ENCODE measurements at regions of chr17 and their contacts with region 1.

Region 1: DNA sequence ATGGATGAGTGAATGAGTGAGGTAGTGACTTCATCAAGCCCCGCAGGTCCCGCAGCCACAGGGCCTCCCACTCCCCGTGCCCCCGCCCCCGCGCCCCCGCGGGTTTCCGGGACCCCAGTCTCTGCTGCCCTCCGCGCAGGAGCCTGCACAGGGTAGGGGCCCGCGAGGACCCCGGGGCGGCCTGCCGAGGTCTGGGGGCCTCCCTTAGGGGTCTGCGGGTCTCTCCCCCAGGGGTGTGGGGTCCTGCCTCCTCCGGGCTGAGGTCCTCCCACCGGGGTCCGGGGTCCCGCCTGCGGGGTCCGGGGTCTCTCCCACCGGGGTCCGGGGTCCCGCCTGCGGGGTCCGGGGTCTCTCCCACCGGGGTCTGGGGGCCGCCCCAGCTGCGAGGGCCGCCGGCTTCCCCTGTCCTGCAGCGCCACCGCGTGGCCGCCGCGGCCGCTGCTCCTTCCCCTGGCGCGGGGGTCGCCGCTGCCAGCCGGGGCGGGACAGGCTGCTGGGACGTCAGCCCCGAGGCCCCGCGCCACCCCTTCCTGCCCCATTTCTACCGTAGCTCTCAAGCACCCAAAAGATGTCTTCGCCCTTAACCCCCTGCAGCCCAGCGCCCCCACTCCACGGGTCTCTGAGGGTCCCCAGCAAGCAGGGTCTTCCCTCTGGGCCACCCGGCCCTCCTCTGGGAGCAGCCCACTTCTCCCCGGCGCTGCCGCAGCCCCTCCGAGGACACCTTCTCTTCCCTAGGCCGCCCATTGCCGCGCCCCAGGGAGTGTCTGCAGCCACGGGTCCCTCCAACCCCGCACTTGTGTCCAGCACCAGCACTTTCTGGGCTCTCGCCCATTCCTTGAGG is 10.4 kb upstream of the CHMP6 start:
- DNase-seq: no peak
- H3K4me3 ChIP-seq: peak overlapping the region in 1 of 2 donors; percentile 11
- H3K27ac ChIP-seq: no peak overlapping the region
- H3K4me1 ChIP-seq: peaks cover 4 to 7% of the 10 kb centered on the region in 2 donors
- H3K27me3 ChIP-seq: no peaks in the 10 kb centered on the region
- CTCF ChIP-seq: peak; percentile 26 to 95 (median 73)

Region 2: GRCh38 chr17:80564545-80564944 is 416.7 kb before region 1 on chr17:
- intact Hi-C with region 1: no loop called
- DNase-seq: no peak
- H3K4me3 ChIP-seq: no peak overlapping the region
- H3K27ac ChIP-seq: no peak overlapping the region
- H3K4me1 ChIP-seq: no peaks in the 10 kb centered on the region
- H3K27me3 ChIP-seq: no peaks in the 10 kb centered on the region
- CTCF ChIP-seq: no peak

Region 3: DNA sequence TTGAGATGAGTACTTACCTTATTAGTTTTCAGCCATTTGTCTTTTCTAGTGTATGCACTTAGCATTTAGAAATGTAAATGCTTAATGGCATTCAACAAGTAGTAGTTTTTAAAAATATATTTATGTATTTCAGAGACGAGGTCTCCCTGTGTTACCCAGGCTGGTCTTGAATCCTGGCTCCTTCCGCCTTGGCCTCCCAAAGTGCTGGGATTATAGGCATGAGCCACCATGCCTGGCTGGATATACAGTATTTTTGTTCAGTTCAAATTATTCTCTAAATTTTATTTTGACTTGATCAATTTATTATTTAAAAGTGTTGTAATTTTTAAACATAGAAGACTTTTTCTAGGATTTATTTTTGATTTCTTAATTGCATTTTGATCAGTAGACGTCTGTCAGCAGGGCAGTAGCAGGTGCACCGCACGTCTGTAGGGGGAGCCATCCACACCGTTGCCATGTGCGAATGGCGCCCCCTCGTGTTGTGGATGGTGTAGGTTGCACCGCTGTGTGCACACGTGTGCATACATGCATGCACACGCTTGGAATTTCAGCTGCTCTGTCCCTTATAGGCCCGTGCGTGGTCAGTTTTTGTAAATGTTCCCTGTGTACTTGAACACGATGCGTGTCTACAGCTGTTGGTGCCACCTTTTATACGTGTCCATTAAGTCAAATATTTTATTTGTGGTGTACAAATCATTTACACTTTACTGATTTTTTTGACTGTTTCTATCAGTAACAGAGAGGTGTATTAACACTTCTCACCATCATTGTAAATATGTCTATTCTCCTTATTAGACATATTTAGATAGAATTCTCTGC is 406.0 kb before region 1 on chr17:
- intact Hi-C with region 1: loop called (anchors 10 kb)
- DNase-seq: peak; percentile 15 to 81
- H3K4me3 ChIP-seq: no peak overlapping the region
- H3K27ac ChIP-seq: no peak overlapping the region
- H3K4me1 ChIP-seq: no peaks in the 10 kb centered on the region
- H3K27me3 ChIP-seq: no peaks in the 10 kb centered on the region
- CTCF ChIP-seq: peak; percentile 89 to 90 (median 90)

Region 4: DNA sequence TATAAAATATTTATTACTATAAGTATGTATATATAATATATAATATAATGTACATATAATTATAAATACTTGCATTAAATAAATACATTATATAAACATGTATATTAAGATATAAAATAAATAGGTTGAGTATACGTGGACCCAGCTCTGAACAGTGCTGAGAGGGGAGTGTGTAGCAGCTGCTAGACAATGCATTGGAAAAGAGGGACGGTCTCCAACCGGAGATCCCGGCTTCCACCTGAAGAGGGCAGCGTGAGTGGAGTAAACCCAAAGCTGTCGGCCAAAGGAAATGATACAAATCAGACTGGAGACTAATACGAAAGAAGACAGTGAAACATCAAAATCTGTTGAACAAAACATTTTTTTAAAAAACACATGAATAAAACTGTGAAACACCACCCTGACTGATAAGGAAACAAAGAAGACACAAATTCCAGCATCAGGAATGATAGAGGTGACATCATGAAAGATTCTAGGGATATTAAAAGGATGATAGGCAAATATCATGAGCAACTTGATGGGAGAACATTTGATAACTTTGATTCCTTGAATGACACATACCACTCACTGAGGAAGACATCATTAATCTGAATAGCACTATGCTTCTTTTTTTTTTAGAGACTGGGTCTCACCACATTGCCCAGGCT is 115.0 kb before region 1 on chr17:
- intact Hi-C with region 1: loop called (anchors 5 kb)
- DNase-seq: peak in 1 of 2 donors; percentile 72
- H3K4me3 ChIP-seq: no peak overlapping the region
- H3K27ac ChIP-seq: no peak overlapping the region
- H3K4me1 ChIP-seq: no peaks in the 10 kb centered on the region
- H3K27me3 ChIP-seq: no peaks in the 10 kb centered on the region
- CTCF ChIP-seq: peak; percentile 47 to 69 (median 64)

Region 5: DNA sequence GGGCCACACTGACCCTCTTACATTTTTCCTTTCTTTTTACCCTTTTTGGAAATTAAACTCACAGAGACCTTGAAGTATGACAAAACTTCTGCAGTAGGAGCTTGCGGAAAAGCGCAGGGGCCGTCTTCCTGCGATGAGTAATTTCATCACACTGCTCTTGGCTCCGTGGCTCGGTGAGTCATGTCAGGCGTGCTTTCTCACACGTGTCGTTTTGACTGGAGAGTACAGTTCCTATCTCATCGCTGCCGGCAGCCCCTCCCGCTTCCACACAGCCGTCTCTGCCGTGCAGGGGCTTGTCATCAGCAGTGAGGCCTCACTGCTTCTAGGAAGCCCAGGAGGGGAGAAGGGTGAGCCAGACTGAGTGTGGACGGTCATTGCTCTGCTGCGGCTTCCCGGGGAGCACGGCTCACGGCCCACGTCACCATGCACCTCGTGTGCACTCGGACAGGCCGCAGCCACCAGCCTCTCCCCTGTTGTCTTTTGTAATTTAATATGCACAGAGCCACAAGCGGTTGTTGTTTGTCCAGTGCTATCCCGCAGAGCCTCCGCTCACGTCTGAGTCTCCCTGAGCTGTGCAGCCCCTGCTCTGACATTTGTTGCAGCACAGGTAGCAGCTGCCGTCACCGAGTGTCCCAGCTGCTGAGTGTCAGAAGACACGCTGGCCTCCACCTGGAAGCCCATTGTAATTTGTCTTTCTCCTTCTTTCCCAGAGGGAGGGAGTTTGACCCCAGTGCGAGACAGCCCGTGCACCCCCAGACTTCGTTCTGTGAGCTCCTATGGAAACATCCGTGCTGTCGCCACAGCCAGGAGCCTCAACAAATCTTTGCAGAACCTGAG is 89.0 kb before region 1 on chr17:
- intact Hi-C with region 1: no loop called
- DNase-seq: peak in 1 of 2 donors; percentile 66
- H3K4me3 ChIP-seq: peak overlapping the region in 1 of 2 donors; percentile 35
- H3K27ac ChIP-seq: peak overlapping the region in 1 of 2 donors; percentile 83
- H3K4me1 ChIP-seq: peaks cover 0 to 4% of the 10 kb centered on the region in 2 donors
- H3K27me3 ChIP-seq: no peaks in the 10 kb centered on the region
- CTCF ChIP-seq: no peak

Region 6: DNA sequence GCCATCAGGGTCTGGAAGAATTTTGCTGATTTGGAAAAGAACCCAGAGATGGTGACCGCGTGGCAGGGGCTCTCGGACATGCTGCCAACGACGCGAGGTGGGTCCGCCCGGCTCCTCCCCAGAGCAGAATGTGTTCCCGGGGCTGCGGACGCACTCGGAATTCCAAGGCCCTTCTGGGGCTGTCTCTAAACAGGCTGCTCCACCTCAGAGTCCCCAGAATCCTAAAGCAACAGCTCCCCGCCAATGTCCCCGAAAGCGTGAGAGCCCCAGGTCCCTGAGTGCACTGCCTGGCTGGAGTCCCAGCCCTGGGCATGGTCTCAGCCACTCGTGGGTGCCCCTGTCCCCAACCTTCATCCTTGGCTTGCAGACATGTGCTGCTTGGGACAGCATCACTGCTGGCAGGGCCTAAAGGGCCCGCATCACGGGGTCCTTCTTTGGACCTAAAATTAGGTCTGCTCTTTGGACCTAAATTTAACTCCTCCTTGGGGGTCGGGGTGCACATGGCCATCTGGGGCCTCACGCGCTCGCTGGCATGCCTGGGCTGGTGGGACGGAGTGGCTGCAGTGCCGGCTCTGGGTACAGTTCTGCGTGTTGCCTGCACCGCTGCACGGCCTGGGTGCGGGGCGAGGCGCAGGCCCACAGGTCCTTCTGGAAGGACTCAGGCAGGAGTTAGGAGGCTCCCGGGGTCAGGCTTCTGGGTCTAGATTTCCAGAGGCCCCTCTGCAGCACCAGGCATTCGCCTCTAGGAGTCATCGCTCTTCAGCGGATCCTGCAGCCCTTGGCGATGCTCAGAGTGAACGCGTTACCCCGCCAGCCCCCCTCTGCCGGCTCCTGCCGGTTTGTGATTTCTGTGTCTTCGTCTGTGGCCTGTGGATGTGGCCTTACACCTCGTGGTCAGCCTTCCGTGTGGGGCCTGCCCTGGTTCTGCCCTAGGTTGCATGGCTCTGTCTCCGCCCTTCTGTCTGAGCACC is 31.5 kb before region 1 on chr17:
- intact Hi-C with region 1: loop called (anchors 5 kb)
- DNase-seq: peak in 1 of 2 donors; percentile 62
- H3K4me3 ChIP-seq: no peak overlapping the region
- H3K27ac ChIP-seq: peak overlapping the region in 1 of 2 donors; percentile 30
- H3K4me1 ChIP-seq: peaks cover 0 to 9% of the 10 kb centered on the region in 2 donors
- H3K27me3 ChIP-seq: no peaks in the 10 kb centered on the region
- CTCF ChIP-seq: no peak

Region 7: DNA sequence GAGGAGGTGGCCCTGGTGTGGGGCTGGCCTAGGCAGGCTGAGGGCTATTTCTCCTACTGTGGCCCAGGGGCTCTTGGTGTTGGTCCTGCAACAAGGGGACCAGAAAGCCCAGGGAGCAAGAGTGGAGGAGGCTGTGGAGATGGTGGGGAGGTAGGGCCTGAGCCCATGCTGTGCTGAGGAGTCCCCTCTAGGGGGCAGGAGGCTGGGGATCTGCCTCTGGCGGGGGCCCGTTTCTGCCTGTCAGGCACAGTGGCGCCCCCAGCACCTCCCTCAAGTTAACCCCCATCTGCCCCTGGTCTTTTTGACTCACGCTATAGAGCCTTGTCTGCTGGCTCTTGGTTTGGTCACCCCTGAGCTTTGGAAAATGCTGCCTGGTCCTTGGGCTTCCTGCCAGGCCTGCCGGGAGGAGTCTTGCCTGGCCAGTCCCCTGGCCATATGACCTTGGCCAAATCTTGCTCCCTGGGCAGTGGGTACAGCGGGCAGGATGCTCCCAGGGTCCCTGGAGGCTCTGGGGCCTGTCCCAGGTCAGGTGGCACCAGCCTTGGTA is 59.6 kb after region 1 on chr17:
- intact Hi-C with region 1: no loop called
- DNase-seq: no peak
- H3K4me3 ChIP-seq: no peak overlapping the region
- H3K27ac ChIP-seq: no peak overlapping the region
- H3K4me1 ChIP-seq: peaks cover 11 to 41% of the 10 kb centered on the region in 2 donors
- H3K27me3 ChIP-seq: no peaks in the 10 kb centered on the region
- CTCF ChIP-seq: no peak